ENCODE measurements at regions of chr4 and their contacts with region 1.

Region 1: GRCh38 chr4:140851032-140851636 is 94.9 kb upstream of the TBC1D9 start:
- DNase-seq: peak; percentile 45
- H3K4me3 ChIP-seq: no peak overlapping the region
- H3K27ac ChIP-seq: no peak overlapping the region
- H3K4me1 ChIP-seq: peaks cover 8% of the 10 kb centered on the region
- H3K27me3 ChIP-seq: no peaks in the 10 kb centered on the region
- CTCF ChIP-seq: peak; percentile 74 to 84

Region 2: GRCh38 chr4:140373328-140374129 is 477.6 kb before region 1 on chr4 and contains the start of gene SCOC:
- CTCF ChIA-PET with region 1: no interaction called
- dilution Hi-C with region 1: no loop called
- in situ Hi-C with region 1: loop called (anchors 10 to 25 kb)
- intact Hi-C with region 1: no loop called
- DNase-seq: peak; percentile 99
- H3K4me3 ChIP-seq: peak within 1 kb of the TSS; percentile 75 to 86 (median 84)
- H3K27ac ChIP-seq: peak within 1 kb of the TSS; percentile 85
- H3K4me1 ChIP-seq: peaks cover 21% of the 10 kb centered on the region
- H3K27me3 ChIP-seq: no peaks in the 10 kb centered on the region
- CTCF ChIP-seq: no peak
- total RNA-seq, gene SCOC: 57.2 to 110 TPM

Region 3: DNA sequence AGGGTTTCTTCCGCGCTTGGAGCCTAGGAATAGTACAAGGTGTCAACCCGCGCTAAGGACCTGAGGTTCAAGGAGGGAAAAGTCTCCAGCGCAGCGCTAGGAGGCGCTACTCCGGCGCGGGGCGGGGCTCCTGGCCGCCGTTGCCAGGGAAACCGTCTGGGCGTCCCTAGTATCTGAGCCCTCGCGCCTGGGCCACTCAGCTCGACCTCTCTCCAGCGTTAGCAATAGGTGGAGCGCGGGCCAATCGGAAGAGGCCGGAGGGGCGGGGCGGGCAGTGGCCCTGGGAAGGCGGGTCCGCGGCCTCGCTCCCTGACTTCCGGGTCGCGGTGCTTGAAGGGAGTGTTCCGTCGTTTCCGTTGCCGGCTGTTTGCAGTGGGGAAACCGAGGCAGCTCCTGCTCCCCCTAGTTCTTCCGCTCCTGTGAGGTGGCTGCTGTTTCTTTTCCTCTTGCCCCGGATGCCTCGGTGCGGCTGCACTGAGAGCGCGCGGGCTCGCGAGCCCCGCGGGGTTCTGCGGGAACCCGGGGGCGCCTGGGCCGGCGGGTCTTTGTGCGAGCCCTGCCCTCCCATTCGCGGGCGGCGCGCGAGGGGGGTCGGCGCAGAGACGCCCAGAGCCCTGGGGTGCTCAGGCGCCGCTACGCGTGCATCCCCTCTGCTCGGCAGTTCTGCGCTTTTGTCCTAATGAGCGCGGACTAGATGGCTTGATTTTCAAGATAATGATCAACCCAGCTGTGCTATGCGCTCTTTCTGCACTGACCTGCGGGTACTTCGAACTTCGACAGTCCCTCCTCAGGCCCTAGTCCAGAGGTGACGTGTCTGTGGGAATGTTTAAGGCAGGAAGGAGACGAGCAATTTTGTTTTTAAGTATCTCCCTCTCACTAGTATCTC is 327.0 kb before region 1 on chr4 and contains the start of gene ELMOD2:
- CTCF ChIA-PET with region 1: interaction called, 5 read pairs
- dilution Hi-C with region 1: no loop called
- in situ Hi-C with region 1: no loop called
- intact Hi-C with region 1: loop called (anchors 1 kb)
- DNase-seq: peak; percentile 97
- H3K4me3 ChIP-seq: peak within 1 kb of the TSS; percentile 68 to 85 (median 82)
- H3K27ac ChIP-seq: peak within 1 kb of the TSS; percentile 66
- H3K4me1 ChIP-seq: peaks cover 5% of the 10 kb centered on the region
- H3K27me3 ChIP-seq: no peaks in the 10 kb centered on the region
- CTCF ChIP-seq: peak; percentile 84 to 91
- total RNA-seq, gene ELMOD2: 28.4 to 43.3 TPM

Region 4: DNA sequence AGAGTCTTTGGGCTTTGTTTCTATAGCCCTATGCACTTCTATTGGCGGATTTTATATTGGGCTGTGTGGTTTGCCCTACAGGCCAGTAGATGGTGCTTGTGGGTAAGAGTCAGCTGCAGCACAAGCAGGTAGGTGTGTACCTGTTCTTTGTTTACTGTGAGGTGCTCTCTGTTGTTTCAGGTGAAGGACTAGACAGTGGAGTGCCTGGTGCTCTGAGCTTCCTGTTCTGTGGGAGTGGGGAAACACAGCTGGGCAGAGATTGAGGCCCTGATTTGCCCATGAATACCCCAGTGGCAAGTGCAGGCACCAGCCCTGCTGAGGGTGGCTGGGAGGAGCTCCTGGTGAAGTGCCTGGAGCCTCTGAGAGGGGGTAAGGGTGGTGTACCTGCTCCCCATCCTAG is 256.1 kb before region 1 on chr4:
- CTCF ChIA-PET with region 1: interaction called, 3 read pairs
- dilution Hi-C with region 1: no loop called
- in situ Hi-C with region 1: no loop called
- intact Hi-C with region 1: loop called (anchors 1 kb)
- DNase-seq: peak; percentile 53
- H3K4me3 ChIP-seq: no peak overlapping the region
- H3K27ac ChIP-seq: no peak overlapping the region
- H3K4me1 ChIP-seq: no peaks in the 10 kb centered on the region
- H3K27me3 ChIP-seq: peaks cover 2% of the 10 kb centered on the region
- CTCF ChIP-seq: peak; percentile 67 to 81

Region 5: GRCh38 chr4:140609548-140610425 is 241.3 kb before region 1 on chr4:
- CTCF ChIA-PET with region 1: no interaction called
- dilution Hi-C with region 1: no loop called
- in situ Hi-C with region 1: loop called in 1 of 2 experiments (anchors 10 kb)
- intact Hi-C with region 1: loop called (anchors 5 kb)
- DNase-seq: peak; percentile 45
- H3K4me3 ChIP-seq: no peak overlapping the region
- H3K27ac ChIP-seq: no peak overlapping the region
- H3K4me1 ChIP-seq: no peaks in the 10 kb centered on the region
- H3K27me3 ChIP-seq: peaks cover 2% of the 10 kb centered on the region
- CTCF ChIP-seq: peak; percentile 47 to 56

Region 6: DNA sequence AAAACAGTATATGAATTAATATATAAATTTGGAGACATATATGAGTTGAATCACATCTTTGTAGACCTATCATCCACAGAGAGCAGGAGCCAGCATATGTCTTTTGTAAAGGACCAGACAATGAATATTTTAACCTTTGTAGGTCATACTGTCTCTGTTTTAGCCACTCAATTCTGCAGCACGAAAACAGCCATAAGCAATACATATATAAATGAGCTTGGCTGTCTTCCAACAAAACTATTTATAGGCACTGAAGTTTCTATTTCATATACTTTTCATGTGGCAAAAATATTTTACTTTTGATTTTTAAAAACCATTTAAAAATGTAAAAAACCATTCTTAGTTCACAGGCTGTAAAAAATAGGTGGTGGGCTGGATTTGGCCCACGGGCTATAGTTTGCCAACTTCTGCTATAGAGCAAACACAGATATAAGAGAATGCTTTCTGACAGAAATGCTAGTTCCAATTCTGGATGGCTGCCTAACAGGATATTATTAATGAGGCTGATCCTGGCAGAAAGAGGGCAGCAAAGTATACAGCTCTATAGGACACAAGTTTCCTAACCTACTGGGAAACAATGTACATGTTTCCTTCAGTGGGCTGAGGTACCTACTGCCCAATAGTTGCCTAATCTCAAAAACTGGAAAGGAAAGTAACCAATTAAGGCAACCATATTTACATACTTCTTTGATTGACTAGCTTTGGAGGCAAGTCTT is 224.3 kb before region 1 on chr4:
- CTCF ChIA-PET with region 1: no interaction called
- dilution Hi-C with region 1: no loop called
- in situ Hi-C with region 1: no loop called
- intact Hi-C with region 1: loop called (anchors 5 kb)
- DNase-seq: no peak
- H3K4me3 ChIP-seq: no peak overlapping the region
- H3K27ac ChIP-seq: no peak overlapping the region
- H3K4me1 ChIP-seq: no peaks in the 10 kb centered on the region
- H3K27me3 ChIP-seq: no peaks in the 10 kb centered on the region
- CTCF ChIP-seq: peak in 1 of 2 donors; percentile 26

Region 7: GRCh38 chr4:140756319-140757231 is 94.6 kb before region 1 on chr4 and contains the start of gene TBC1D9:
- CTCF ChIA-PET with region 1: no interaction called
- dilution Hi-C with region 1: no loop called
- in situ Hi-C with region 1: no loop called
- intact Hi-C with region 1: loop called (anchors 2 kb)
- DNase-seq: peak; percentile 87
- H3K4me3 ChIP-seq: peak within 1 kb of the TSS; percentile 72 to 87 (median 81)
- H3K27ac ChIP-seq: peak within 1 kb of the TSS; percentile 79
- H3K4me1 ChIP-seq: peaks cover 5% of the 10 kb centered on the region
- H3K27me3 ChIP-seq: no peaks in the 10 kb centered on the region
- CTCF ChIP-seq: no peak
- total RNA-seq, gene TBC1D9: 23.5 to 42.8 TPM

Region 8: DNA sequence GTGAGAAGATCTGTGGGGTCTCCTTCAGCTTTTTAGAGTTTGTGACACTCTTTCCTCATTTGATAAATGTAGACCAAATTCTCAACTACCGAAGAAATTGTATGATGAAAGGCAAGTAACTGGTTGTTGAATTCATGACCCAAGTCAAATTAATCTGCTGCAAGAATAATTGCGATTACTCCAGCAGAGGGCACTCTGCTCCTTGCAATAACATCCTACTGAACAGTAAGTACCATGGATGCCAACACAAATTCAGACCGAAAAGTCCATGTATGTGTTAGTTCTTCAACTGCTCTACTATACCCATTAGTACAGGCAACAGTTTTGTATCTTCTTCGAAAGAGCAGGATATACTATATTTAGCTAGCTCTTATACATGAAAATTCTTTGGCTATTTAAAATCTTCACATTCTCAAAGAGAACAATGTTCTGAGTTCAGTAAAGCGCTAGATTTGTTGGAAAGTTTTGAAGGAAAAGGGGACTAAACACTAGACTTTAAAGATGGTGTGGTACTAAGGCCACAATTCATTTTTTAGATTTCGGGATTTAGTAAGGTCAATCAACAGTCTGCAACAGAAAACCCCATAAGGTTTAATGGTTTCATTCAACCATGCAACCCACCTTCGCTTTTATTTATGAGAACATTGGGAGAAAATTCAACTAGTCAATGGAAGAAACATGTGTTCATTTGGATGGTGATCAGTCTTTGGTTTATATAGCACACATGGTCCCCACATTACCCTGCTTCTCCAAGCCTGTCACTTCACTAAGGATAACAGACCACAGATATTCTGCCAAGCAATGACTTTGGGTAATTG is 10.4 kb after region 1 on chr4:
- CTCF ChIA-PET with region 1: no interaction called
- dilution Hi-C with region 1: no loop called
- in situ Hi-C with region 1: no loop called
- intact Hi-C with region 1: no loop called
- DNase-seq: peak; percentile 56
- H3K4me3 ChIP-seq: no peak overlapping the region
- H3K27ac ChIP-seq: no peak overlapping the region
- H3K4me1 ChIP-seq: peaks cover 25% of the 10 kb centered on the region
- H3K27me3 ChIP-seq: peaks cover 3% of the 10 kb centered on the region
- CTCF ChIP-seq: peak; percentile 75 to 76